ENCODE measurements at regions of chr3 and their contacts with region 1.

Region 1: GRCh38 chr3:133040696-133041523 is 2.7 kb downstream of the TMEM108 start:
- DNase-seq: peak; percentile 92
- H3K4me3 Mint-ChIP-seq: no peak overlapping the region
- H3K27ac Mint-ChIP-seq: no peak overlapping the region
- H3K4me1 Mint-ChIP-seq: no peaks in the 10 kb centered on the region
- H3K27me3 Mint-ChIP-seq: peaks cover 81% of the 10 kb centered on the region
- CTCF ChIP-seq: peak; percentile 93

Region 2: GRCh38 chr3:132730891-132731580 is 309.9 kb before region 1 on chr3:
- CTCF ChIA-PET with region 1: interaction called, 15 read pairs
- intact Hi-C with region 1: loop called (anchors 2 kb)
- DNase-seq: peak; percentile 48
- H3K4me3 Mint-ChIP-seq: no peak overlapping the region
- H3K27ac Mint-ChIP-seq: no peak overlapping the region
- H3K4me1 Mint-ChIP-seq: no peaks in the 10 kb centered on the region
- H3K27me3 Mint-ChIP-seq: peaks cover 65% of the 10 kb centered on the region
- CTCF ChIP-seq: peak; percentile 52

Region 3: GRCh38 chr3:132964266-132964665 is 76.6 kb before region 1 on chr3:
- CTCF ChIA-PET with region 1: no interaction called
- intact Hi-C with region 1: no loop called
- DNase-seq: no peak
- H3K4me3 Mint-ChIP-seq: no peak overlapping the region
- H3K27ac Mint-ChIP-seq: no peak overlapping the region
- H3K4me1 Mint-ChIP-seq: no peaks in the 10 kb centered on the region
- H3K27me3 Mint-ChIP-seq: peaks cover 4% of the 10 kb centered on the region
- CTCF ChIP-seq: no peak

Region 4: DNA sequence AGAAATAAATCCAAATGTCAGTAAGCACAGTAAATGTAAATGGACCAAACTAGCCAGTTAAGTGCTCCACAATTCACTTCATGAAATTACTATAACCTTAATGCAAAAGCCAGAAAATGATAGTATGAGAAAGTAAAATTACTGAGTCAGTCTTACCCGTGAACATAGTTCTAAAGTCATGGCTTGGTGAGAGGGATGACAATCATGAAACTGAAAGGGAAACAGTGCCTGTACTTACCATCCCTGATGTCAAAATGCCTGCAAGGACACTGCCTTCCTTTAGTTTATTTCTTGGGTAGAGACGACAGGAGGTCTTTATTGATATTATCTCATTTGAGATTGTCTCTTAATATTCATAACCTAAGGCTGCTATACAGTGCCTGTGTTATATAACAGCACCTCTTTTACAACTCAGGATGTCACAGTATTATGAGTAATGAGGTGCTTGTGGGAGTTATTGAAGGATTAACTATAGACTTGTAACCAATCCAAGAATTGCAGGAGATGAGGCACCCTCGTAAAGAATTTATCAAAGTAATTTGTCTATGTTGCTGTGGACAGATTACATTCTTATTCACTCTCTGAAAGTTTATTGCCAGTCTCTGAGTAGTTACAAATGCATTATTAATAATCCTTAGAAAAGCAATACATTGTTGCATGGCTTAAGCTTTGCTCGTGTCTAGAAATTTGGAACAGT is 216.0 kb after region 1 on chr3:
- CTCF ChIA-PET with region 1: no interaction called
- intact Hi-C with region 1: no loop called
- DNase-seq: no peak
- H3K4me3 Mint-ChIP-seq: no peak overlapping the region
- H3K27ac Mint-ChIP-seq: no peak overlapping the region
- H3K4me1 Mint-ChIP-seq: no peaks in the 10 kb centered on the region
- H3K27me3 Mint-ChIP-seq: peaks cover 42% of the 10 kb centered on the region
- CTCF ChIP-seq: no peak

Region 5: GRCh38 chr3:133377396-133377795 is 336.5 kb after region 1 on chr3:
- CTCF ChIA-PET with region 1: interaction called, 53 read pairs
- intact Hi-C with region 1: loop called (anchors 1 kb)
- DNase-seq: peak; percentile 51
- H3K4me3 Mint-ChIP-seq: no peak overlapping the region
- H3K27ac Mint-ChIP-seq: no peak overlapping the region
- H3K4me1 Mint-ChIP-seq: peaks cover 13% of the 10 kb centered on the region
- H3K27me3 Mint-ChIP-seq: peaks cover 98% of the 10 kb centered on the region
- CTCF ChIP-seq: peak; percentile 56

Region 6: GRCh38 chr3:133426721-133427120 is 385.8 kb after region 1 on chr3:
- CTCF ChIA-PET with region 1: interaction called, 10 read pairs
- intact Hi-C with region 1: loop called (anchors 1 kb)
- DNase-seq: no peak
- H3K4me3 Mint-ChIP-seq: no peak overlapping the region
- H3K27ac Mint-ChIP-seq: no peak overlapping the region
- H3K4me1 Mint-ChIP-seq: no peaks in the 10 kb centered on the region
- H3K27me3 Mint-ChIP-seq: peaks cover 68% of the 10 kb centered on the region
- CTCF ChIP-seq: no peak

Measured in Calu3 (cell line).